ENCODE measurements at regions of chr5 and their contacts with region 1.

Region 1: GRCh38 chr5:138850865-138851435 is 24.2 kb downstream of the LRRTM2 start:
- DNase-seq: peak; percentile 67
- H3K4me3 Mint-ChIP-seq: no peak overlapping the region
- H3K27ac Mint-ChIP-seq: no peak overlapping the region
- H3K4me1 Mint-ChIP-seq: peaks cover 35% of the 10 kb centered on the region
- H3K27me3 Mint-ChIP-seq: no peaks in the 10 kb centered on the region
- CTCF ChIP-seq: no peak

Region 2: GRCh38 chr5:138654281-138654867 is 196.6 kb before region 1 on chr5:
- CTCF ChIA-PET with region 1: no interaction called
- POLR2A ChIA-PET with region 1: no interaction called
- intact Hi-C with region 1: no loop called
- DNase-seq: no peak
- H3K4me3 Mint-ChIP-seq: no peak overlapping the region
- H3K27ac Mint-ChIP-seq: no peak overlapping the region
- H3K4me1 Mint-ChIP-seq: no peaks in the 10 kb centered on the region
- H3K27me3 Mint-ChIP-seq: no peaks in the 10 kb centered on the region
- CTCF ChIP-seq: no peak

Region 3: GRCh38 chr5:138869763-138870500 is 19.0 kb after region 1 on chr5:
- CTCF ChIA-PET with region 1: interaction called, 6 read pairs
- POLR2A ChIA-PET with region 1: interaction called, 27 read pairs
- intact Hi-C with region 1: no loop called
- DNase-seq: peak; percentile 21
- H3K4me3 Mint-ChIP-seq: peak overlapping the region; percentile 50
- H3K27ac Mint-ChIP-seq: peak overlapping the region; percentile 90
- H3K4me1 Mint-ChIP-seq: peaks cover 55% of the 10 kb centered on the region
- H3K27me3 Mint-ChIP-seq: no peaks in the 10 kb centered on the region
- CTCF ChIP-seq: no peak

Region 4: GRCh38 chr5:139131465-139131864 is 280.5 kb after region 1 on chr5:
- CTCF ChIA-PET with region 1: no interaction called
- POLR2A ChIA-PET with region 1: no interaction called
- intact Hi-C with region 1: no loop called
- DNase-seq: no peak
- H3K4me3 Mint-ChIP-seq: no peak overlapping the region
- H3K27ac Mint-ChIP-seq: no peak overlapping the region
- H3K4me1 Mint-ChIP-seq: no peaks in the 10 kb centered on the region
- H3K27me3 Mint-ChIP-seq: no peaks in the 10 kb centered on the region
- CTCF ChIP-seq: no peak

Measured in MCF 10A (cell line).